ENCODE measurements at regions of chr1 and their contacts with region 1.

Region 1: GRCh38 chr1:24694380-24694843 is 50.8 kb upstream of the CLIC4 start:
- DNase-seq: peak in 1 of 14 experiments; percentile 56
- ATAC-seq: no peak
- H3K4me3 ChIP-seq: no peak overlapping the region
- H3K4me3 Mint-ChIP-seq: no peak overlapping the region
- H3K27ac ChIP-seq: no peak overlapping the region
- H3K27ac Mint-ChIP-seq: no peak overlapping the region
- H3K4me1 ChIP-seq: peaks cover 17% of the 10 kb centered on the region
- H3K4me1 Mint-ChIP-seq: no peaks in the 10 kb centered on the region
- H3K27me3 ChIP-seq: no peaks in the 10 kb centered on the region
- H3K27me3 Mint-ChIP-seq: no peaks in the 10 kb centered on the region
- CTCF ChIP-seq: no peak

Region 2: GRCh38 chr1:25204797-25205480 is 510.5 kb after region 1 on chr1:
- CTCF ChIA-PET with region 1: no interaction called
- POLR2A ChIA-PET with region 1: no interaction called
- intact Hi-C with region 1: loop called in 1 of 2 experiments (anchors 10 kb)
- DNase-seq: peak in 6 of 14 experiments; percentile 6 to 73 (median 34)
- ATAC-seq: peak; percentile 74
- H3K4me3 ChIP-seq: no peak overlapping the region
- H3K4me3 Mint-ChIP-seq: no peak overlapping the region
- H3K27ac ChIP-seq: no peak overlapping the region
- H3K27ac Mint-ChIP-seq: no peak overlapping the region
- H3K4me1 ChIP-seq: peaks cover 3% of the 10 kb centered on the region
- H3K4me1 Mint-ChIP-seq: no peaks in the 10 kb centered on the region
- H3K27me3 ChIP-seq: no peaks in the 10 kb centered on the region
- H3K27me3 Mint-ChIP-seq: no peaks in the 10 kb centered on the region
- CTCF ChIP-seq: peak; percentile 88